MCF 10A (cell line): ENCODE measurements at regions of chr2 and their contacts with region 1.

Region 1: DNA sequence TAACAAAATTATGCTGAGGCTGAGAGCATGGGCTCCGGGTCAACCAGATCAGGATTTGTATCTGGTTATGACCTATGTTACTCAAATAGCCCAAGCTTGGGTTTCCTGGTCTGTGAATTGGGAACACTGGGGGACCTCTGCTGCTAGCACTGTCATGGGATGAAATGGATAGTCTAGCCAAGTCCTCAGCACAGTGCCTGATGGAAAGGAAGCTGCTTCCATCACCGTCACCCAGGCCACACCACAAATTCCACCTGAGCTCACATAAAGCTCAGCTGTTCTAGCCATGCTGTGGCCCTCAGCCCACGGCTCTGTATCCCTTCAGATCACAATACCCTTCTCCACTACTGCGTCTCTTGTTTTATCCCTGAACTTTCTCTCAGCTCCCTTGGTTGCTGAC is 179.6 kb upstream of the SP5 start:
- DNase-seq: no peak
- H3K4me3 Mint-ChIP-seq: no peak overlapping the region
- H3K27ac Mint-ChIP-seq: no peak overlapping the region
- H3K4me1 Mint-ChIP-seq: peaks cover 5% of the 10 kb centered on the region
- H3K27me3 Mint-ChIP-seq: no peaks in the 10 kb centered on the region
- CTCF ChIP-seq: no peak

Region 2: DNA sequence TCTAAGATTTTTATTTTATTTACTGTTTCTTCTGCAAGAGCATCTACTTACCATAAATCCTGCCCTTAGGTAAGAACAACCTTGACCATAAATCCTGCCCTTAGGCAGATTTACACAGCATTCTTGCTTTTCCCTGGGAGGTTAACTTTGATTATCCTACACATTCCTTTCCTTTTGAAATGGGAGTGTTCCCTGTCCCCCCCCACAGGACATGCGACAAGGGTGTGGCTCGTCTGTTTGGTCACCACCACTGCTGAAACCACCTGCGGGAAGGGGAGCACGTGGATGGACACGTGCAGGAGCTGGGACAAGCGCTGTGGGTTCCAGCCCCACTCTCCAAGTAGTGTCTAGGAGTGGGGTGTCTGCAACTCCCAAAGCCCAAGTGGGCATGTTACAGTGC is 59.7 kb before region 1 on chr2:
- CTCF ChIA-PET with region 1: no interaction called
- POLR2A ChIA-PET with region 1: no interaction called
- intact Hi-C with region 1: no loop called
- DNase-seq: no peak
- H3K4me3 Mint-ChIP-seq: no peak overlapping the region
- H3K27ac Mint-ChIP-seq: no peak overlapping the region
- H3K4me1 Mint-ChIP-seq: no peaks in the 10 kb centered on the region
- H3K27me3 Mint-ChIP-seq: no peaks in the 10 kb centered on the region
- CTCF ChIP-seq: no peak

Region 3: GRCh38 chr2:170486730-170487129 is 48.8 kb before region 1 on chr2:
- CTCF ChIA-PET with region 1: no interaction called
- POLR2A ChIA-PET with region 1: no interaction called
- intact Hi-C with region 1: loop called (anchors 1 kb)
- DNase-seq: peak; percentile 11
- H3K4me3 Mint-ChIP-seq: no peak overlapping the region
- H3K27ac Mint-ChIP-seq: no peak overlapping the region
- H3K4me1 Mint-ChIP-seq: no peaks in the 10 kb centered on the region
- H3K27me3 Mint-ChIP-seq: no peaks in the 10 kb centered on the region
- CTCF ChIP-seq: no peak

Region 4: GRCh38 chr2:170695521-170696410 is 160.2 kb after region 1 on chr2:
- CTCF ChIA-PET with region 1: no interaction called
- POLR2A ChIA-PET with region 1: no interaction called
- intact Hi-C with region 1: no loop called
- DNase-seq: no peak
- H3K4me3 Mint-ChIP-seq: no peak overlapping the region
- H3K27ac Mint-ChIP-seq: no peak overlapping the region
- H3K4me1 Mint-ChIP-seq: no peaks in the 10 kb centered on the region
- H3K27me3 Mint-ChIP-seq: peaks cover 14% of the 10 kb centered on the region
- CTCF ChIP-seq: no peak